PC-3 (cell line): ENCODE measurements at regions of chr18 and their contacts with region 1.

Region 1: DNA sequence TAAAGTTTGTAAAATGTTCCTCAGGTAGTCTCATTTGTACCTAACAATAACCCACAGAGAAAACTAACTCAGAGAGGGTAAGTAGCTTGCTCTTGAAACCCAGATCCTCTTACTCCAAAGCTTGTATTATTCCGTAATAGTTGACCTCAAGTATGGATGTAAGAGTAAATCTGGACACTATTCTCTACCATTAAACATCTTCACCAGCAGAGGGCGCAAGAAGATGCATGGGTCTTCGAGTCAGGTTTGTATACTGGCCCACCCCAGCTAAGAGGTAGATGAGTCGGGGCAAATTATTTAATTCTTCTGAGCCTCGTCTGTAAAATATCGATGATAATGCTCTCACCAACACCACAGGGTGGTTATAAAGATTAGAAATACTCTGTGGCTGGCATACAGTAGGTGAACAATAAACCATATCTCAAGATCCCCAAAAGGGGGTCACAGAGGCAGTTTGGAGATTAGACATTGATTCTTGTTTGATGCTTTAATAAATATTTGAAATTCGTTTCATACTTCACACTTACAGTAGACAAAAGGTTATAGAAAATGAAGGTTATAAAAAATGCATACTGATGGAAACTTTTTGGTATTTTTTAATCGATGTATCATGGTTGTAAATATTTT is 3.5 kb upstream of the CABLES1 start:
- DNase-seq: peak; percentile 85
- ATAC-seq: no peak
- H3K4me3 ChIP-seq: no peak overlapping the region
- H3K27ac ChIP-seq: no peak overlapping the region
- H3K4me1 ChIP-seq: peaks cover 20% of the 10 kb centered on the region
- H3K27me3 ChIP-seq: no peaks in the 10 kb centered on the region
- CTCF ChIP-seq: peak; percentile 91

Region 2: GRCh38 chr18:23077493-23078256 is 54.1 kb before region 1 on chr18:
- CTCF ChIA-PET with region 1: interaction called, 3 read pairs
- POLR2A ChIA-PET with region 1: no interaction called
- intact Hi-C with region 1: loop called (anchors 1 kb)
- DNase-seq: peak; percentile 60
- ATAC-seq: peak; percentile 94
- H3K4me3 ChIP-seq: no peak overlapping the region
- H3K27ac ChIP-seq: 0 out of 2 replicates have a peak overlapping the region, but pooled peaks have one; percentile 2
- H3K4me1 ChIP-seq: peaks cover 13% of the 10 kb centered on the region
- H3K27me3 ChIP-seq: no peaks in the 10 kb centered on the region
- CTCF ChIP-seq: peak; percentile 68

Region 3: DNA sequence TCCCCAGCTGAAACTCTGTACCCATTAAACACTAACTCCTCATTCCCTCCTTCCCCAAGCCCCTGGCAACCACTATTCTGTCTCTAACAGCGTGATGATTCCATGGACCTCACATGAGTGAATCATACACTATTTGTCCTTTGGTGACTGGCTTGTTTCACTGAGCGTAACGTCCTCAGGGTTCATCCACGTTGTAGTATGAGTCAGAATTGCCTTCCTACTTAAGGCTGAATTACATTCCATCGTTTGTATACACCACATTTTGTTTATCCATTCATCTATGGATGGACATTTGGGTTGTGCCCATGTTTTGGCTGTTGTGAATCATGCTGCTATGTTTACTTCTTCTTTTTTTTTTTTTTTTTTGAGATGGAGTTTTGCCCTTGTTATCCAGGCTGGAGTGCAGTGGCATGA is 16.1 kb before region 1 on chr18:
- CTCF ChIA-PET with region 1: no interaction called
- POLR2A ChIA-PET with region 1: no interaction called
- intact Hi-C with region 1: loop called (anchors 2 kb)
- DNase-seq: peak; percentile 99
- ATAC-seq: peak; percentile 98
- H3K4me3 ChIP-seq: no peak overlapping the region
- H3K27ac ChIP-seq: peak overlapping the region; percentile 95
- H3K4me1 ChIP-seq: peaks cover 24% of the 10 kb centered on the region
- H3K27me3 ChIP-seq: no peaks in the 10 kb centered on the region
- CTCF ChIP-seq: no peak

Region 4: DNA sequence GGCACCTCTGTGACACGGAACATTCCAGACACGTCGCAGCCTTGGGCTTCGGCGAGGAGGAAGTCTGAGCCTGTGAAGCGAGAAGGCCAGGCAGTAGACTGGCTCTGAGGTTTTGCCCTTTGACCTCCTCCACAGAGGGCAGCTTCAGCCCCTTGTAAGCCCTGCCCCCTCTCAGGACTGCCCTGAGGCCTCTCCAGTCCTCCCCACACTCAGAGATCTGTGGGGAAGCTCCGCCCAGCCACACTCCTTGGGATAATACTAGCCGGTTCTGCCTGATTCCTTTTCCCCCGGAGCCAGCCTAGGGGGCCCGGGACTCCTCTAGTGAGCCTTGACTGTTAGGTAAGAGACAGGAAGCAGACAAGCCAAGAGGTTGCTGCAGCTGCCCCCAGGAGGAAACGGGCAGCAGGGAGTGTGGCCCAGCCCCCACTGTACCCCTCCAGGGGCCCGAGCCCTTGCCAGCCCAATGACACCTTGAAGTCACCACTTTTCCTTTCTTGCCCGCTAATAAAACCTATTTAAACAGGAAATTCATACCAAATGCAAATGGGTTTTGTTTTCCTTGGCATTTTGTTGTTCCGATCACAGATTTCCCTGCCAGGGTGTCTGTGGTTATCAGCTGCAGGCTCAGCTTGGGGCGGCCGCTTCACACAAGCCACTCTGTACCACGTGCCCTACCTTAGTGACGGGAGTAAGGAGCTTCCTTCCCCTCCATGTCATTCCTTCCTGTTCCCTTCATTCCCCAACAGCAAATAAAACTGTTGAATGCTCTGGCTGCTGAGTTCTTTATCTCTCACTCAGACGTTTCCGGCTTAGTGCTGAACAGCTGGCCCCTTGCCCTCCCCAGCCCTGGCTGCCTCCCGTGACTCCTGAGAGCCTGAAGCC is 128.1 kb after region 1 on chr18:
- CTCF ChIA-PET with region 1: no interaction called
- POLR2A ChIA-PET with region 1: interaction called, 11 read pairs
- intact Hi-C with region 1: no loop called
- DNase-seq: peak; percentile 89
- ATAC-seq: peak; percentile 85
- H3K4me3 ChIP-seq: peak overlapping the region; percentile 48; the same call in 1 of the 2 replicates
- H3K27ac ChIP-seq: peak overlapping the region; percentile 95
- H3K4me1 ChIP-seq: peaks cover 42% of the 10 kb centered on the region
- H3K27me3 ChIP-seq: no peaks in the 10 kb centered on the region
- CTCF ChIP-seq: no peak

Region 5: GRCh38 chr18:23270986-23271680 is 139.3 kb after region 1 on chr18:
- CTCF ChIA-PET with region 1: no interaction called
- POLR2A ChIA-PET with region 1: no interaction called
- intact Hi-C with region 1: no loop called
- DNase-seq: no peak
- ATAC-seq: no peak
- H3K4me3 ChIP-seq: no peak overlapping the region
- H3K27ac ChIP-seq: no peak overlapping the region
- H3K4me1 ChIP-seq: no peaks in the 10 kb centered on the region
- H3K27me3 ChIP-seq: no peaks in the 10 kb centered on the region
- CTCF ChIP-seq: no peak

Region 6: DNA sequence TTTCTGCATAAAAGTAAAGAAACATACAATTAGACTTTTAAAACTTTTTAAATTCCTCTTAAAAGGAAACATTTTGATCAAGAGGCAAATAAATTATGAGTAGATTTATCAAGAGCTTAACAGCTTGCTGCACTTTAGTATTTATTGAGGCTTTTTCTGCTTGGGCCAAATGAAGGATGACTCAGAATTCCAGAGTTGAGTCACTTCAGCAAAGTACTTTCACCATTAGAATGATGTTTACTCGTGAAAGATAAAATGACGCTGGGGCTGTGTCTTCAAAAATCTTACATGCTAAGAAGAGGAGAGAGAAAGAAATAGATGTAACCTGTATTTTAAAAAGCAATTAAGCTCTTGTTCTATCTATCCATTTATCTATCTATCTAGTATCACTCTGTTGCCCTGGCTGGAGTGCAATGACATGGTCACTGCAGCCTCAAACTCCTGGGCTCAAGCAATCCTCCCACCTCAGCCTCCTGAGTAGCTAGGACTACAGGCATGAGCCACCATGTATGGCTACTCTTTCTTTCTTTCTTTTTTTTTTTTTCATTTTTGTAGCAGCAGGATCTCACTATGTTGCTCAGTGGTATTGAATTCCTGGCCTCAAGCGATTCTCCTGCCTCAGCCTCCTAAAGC is 246.0 kb after region 1 on chr18:
- CTCF ChIA-PET with region 1: interaction called, 5 read pairs
- POLR2A ChIA-PET with region 1: no interaction called
- intact Hi-C with region 1: loop called (anchors 1 kb)
- DNase-seq: peak; percentile 89
- ATAC-seq: peak; percentile 65
- H3K4me3 ChIP-seq: peak overlapping the region; percentile 29; the same call in 1 of the 2 replicates
- H3K27ac ChIP-seq: peak overlapping the region; percentile 86
- H3K4me1 ChIP-seq: peaks cover 38% of the 10 kb centered on the region
- H3K27me3 ChIP-seq: no peaks in the 10 kb centered on the region
- CTCF ChIP-seq: no peak

Region 7: DNA sequence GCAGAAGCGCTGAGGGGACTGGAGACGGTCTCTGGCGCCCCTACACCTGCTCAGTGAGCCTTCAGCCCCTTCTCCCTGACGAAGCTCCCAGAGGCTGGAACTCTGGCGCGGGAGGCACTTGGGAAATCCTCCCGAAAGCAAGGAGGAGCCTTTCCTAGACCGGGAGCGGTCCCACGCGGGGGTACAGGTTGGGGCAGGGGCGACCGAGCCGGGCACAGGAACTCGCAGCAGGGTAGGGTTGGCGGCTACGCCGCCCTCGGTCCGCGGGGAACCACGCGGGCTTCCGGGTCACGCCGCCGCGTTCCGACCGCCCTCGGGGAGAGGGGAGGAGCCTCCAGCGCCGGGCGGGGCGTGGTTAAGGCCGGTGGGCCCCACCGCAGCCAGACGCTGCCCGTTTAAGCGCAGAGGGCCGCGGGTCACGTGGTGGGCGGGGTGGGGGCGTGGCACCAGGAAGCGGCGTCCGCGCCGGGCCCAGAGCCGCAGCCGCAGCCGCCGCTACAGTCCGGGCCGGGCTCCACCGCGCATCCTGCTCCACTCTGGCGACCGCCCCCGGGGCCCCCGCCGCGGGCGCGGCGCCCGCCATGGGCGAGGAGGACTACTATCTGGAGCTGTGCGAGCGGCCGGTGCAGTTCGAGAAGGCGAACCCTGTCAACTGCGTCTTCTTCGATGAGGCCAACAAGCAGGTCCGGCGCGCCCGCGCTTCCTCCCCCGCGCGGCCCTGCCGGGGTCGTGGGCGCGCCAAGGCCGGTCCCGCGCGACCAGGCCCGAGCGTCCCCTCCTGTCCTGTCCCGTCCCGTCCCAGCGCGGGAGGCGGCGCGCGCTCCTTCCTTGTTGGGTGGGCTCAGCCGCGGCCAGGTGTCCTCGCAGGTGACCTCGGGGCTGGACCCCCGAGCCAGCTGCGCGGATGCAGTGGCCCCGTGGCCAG is 371.5 kb after region 1 on chr18 and contains the start of gene RMC1:
- CTCF ChIA-PET with region 1: no interaction called
- POLR2A ChIA-PET with region 1: no interaction called
- intact Hi-C with region 1: loop called (anchors 5 kb)
- DNase-seq: peak; percentile 93
- ATAC-seq: peak; percentile 78
- H3K4me3 ChIP-seq: peak within 1 kb of the TSS; percentile 85
- H3K27ac ChIP-seq: peak within 1 kb of the TSS; percentile 44
- H3K4me1 ChIP-seq: peaks cover 20% of the 10 kb centered on the region; the same call in 1 of the 2 replicates
- H3K27me3 ChIP-seq: no peaks in the 10 kb centered on the region
- CTCF ChIP-seq: no peak
- total RNA-seq, gene RMC1: 23.2 and 27.6 TPM in 2 replicates